A549 (cell line): ENCODE measurements at regions of chr6 and their contacts with region 1.

Region 1: GRCh38 chr6:8219352-8219943 is 117.1 kb upstream of the EEF1E1 start:
- DNase-seq: peak; percentile 27 to 48
- ATAC-seq: peak in 1 of 2 experiments; percentile 75; a peak in 3 of 6 replicates
- H3K4me3 ChIP-seq: no peak overlapping the region
- H3K27ac ChIP-seq: no peak overlapping the region
- H3K4me1 ChIP-seq: no peaks in the 10 kb centered on the region
- CTCF ChIP-seq: peak; percentile 65
- EP300 ChIP-seq: no peak
- POLR2A ChIP-seq: no peak
- RAD21 ChIP-seq: peak; percentile 68 to 70

Region 2: DNA sequence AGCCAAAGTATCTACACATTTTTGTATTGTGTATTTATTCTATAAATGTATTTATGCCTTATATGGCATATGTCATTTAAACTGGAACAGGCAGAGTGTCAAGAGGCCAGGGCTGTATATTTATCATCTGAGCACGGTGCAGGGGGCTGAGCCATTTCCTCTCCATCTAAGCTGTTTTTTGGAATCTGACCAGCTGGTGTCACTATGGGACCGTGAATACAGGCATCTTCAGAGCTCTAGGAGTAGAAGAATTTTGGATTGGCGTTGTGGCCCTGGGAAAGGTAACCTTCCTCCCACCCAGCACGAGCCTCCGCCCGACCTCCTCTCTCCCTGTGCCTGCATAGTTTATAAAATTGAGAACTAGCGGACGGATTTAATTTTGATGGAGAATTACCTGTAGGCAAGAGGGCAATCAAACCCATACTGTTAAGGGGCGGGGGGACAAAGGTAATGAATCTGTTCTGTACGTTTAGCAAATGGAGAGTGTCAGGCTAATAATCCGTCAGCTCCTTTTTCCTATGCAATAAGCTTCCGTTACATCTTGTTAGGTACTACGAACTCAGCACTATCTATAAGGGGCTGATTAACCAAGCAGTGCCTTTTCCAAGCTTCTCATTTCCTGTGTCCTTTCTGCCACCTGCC is 88.1 kb before region 1 on chr6:
- CTCF ChIA-PET with region 1: interaction called, 137 read pairs
- POLR2A ChIA-PET with region 1: interaction called, 5 read pairs
- DNase-seq: peak; percentile 28 to 50
- ATAC-seq: peak; percentile 95 to 96
- H3K4me3 ChIP-seq: no peak overlapping the region
- H3K27ac ChIP-seq: no peak overlapping the region
- H3K4me1 ChIP-seq: no peaks in the 10 kb centered on the region; the same call in 2 of the 3 replicates
- CTCF ChIP-seq: peak; percentile 70
- EP300 ChIP-seq: no peak
- POLR2A ChIP-seq: no peak
- RAD21 ChIP-seq: peak; percentile 80

Region 3: DNA sequence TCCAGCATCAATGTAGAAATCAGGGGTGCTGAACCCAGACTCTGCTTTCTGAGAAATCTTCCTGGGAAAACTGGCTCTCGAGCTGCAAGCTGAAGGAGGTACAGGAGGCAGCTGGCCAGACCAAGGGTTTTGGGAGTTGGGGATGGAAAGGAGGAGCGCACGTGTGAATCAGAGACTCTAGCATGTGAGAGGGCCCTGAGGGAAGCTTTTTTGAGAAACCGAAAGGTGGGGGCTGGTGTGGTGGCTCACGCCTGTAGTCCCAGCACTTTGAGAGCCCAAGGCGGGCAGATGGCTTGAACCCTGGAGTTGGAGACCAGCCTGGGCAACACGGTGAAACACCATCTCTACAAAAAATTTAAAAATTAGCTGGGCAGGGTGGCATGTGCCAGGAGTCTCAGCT is 80.0 kb before region 1 on chr6:
- CTCF ChIA-PET with region 1: interaction called, 137 read pairs
- POLR2A ChIA-PET with region 1: no interaction called
- DNase-seq: no peak
- ATAC-seq: no peak
- H3K4me3 ChIP-seq: no peak overlapping the region
- H3K27ac ChIP-seq: no peak overlapping the region
- H3K4me1 ChIP-seq: no peaks in the 10 kb centered on the region
- CTCF ChIP-seq: no peak
- EP300 ChIP-seq: no peak
- POLR2A ChIP-seq: no peak
- RAD21 ChIP-seq: no peak

Region 4: DNA sequence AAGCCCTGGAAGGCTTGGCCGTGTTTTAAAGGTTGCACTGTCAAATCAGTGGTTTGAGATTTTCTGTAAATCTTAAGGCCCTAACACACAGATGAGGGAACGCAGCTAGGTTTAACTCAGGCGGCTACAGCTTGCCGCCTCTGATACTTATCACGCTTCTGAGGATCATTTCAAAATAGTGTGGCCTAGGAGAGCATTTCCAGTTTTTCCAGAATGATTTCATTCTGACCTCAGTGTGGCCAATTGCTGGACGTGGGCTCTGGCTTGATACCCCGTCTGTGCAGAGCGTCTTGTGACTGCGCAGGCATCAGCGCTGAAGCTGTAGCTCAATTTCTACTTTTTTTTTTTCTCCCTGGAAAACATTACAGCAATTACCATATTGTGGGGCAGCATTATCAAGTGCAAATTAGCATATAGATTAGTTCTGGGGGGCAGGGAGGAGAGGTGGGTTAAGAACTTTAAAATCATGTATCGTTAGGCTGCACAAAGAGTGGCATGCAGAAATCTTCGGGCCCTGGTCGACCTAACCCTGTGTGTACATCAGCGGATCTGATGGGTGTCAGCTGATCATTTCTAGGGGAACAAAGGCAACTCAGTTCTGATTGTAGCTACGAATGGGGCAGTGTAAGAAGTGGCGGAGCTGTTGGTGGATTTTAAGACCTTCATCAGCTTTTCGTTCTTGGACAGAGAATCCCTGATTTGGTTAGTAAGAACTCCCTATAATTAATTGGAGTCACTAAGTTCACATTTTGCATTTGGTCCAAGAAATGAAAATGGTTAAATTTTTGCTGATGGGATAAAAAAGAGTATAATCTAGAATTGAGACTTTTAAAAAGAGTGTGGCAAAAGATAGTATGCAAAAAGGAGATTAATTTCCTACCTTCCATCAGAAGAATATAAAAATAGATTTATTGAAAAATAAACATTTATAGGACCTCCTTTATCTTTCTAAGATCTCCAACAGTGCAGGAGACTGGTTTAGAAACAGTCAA is 12.0 kb before region 1 on chr6:
- CTCF ChIA-PET with region 1: interaction called, 20 read pairs
- POLR2A ChIA-PET with region 1: no interaction called
- DNase-seq: no peak
- ATAC-seq: no peak
- H3K4me3 ChIP-seq: no peak overlapping the region
- H3K27ac ChIP-seq: no peak overlapping the region
- H3K4me1 ChIP-seq: no peaks in the 10 kb centered on the region
- CTCF ChIP-seq: no peak
- EP300 ChIP-seq: no peak
- POLR2A ChIP-seq: no peak
- RAD21 ChIP-seq: no peak

Region 5: DNA sequence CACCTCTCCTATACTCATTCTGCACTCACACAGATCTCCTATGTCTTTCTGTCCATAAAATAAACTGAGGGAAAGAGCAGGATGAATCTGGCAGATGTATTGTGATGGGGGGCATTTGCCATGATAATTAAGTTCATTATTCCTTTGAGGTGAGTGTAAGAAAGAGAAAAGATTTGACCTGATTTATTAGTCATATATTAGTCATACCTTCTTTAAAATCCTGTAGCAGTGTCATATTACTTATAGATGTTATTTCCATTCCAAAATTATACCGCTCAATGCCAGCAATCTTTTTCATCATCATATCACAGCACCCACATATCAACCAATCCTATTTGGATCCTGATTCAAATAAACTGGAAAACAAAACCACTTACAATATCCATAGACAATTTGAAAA is 949.2 kb after region 1 on chr6:
- CTCF ChIA-PET with region 1: no interaction called
- POLR2A ChIA-PET with region 1: no interaction called
- DNase-seq: no peak
- ATAC-seq: no peak
- H3K4me3 ChIP-seq: no peak overlapping the region
- H3K27ac ChIP-seq: no peak overlapping the region
- H3K4me1 ChIP-seq: no peaks in the 10 kb centered on the region
- CTCF ChIP-seq: no peak
- EP300 ChIP-seq: no peak
- POLR2A ChIP-seq: no peak
- RAD21 ChIP-seq: no peak